ENCODE measurements at regions of chr16 and their contacts with region 1.

Region 1: GRCh38 chr16:89193021-89193575 is 7.2 kb downstream of the SLC22A31 start:
- DNase-seq: peak; percentile 82
- H3K4me3 Mint-ChIP-seq: no peak overlapping the region
- H3K27ac Mint-ChIP-seq: no peak overlapping the region
- H3K4me1 Mint-ChIP-seq: no peaks in the 10 kb centered on the region
- H3K27me3 Mint-ChIP-seq: no peaks in the 10 kb centered on the region

Region 2: GRCh38 chr16:89246903-89247733 is 54.0 kb after region 1 on chr16:
- intact Hi-C with region 1: loop called (anchors 2 kb)
- DNase-seq: peak; percentile 97
- H3K4me3 Mint-ChIP-seq: peak overlapping the region; percentile 76
- H3K27ac Mint-ChIP-seq: no peak overlapping the region
- H3K4me1 Mint-ChIP-seq: peaks cover 6% of the 10 kb centered on the region
- H3K27me3 Mint-ChIP-seq: peaks cover 4% of the 10 kb centered on the region

Measured in activated CD4-positive, alpha-beta T cell treated with anti-CD3 and anti-CD28 coated beads, Interleukin-2, amount 10 ng/mL, durations not matched to agents 24 days and 14 days (primary cell).